Caco-2 (cell line): ENCODE measurements at regions of chr15 and their contacts with region 1.

Region 1: GRCh38 chr15:101294731-101295606 is at the start of gene SNRPA1:
- DNase-seq: peak; percentile 95 to 97
- H3K4me3 ChIP-seq: peak within 1 kb of the TSS; percentile 99
- H3K4me3 Mint-ChIP-seq: peak within 1 kb of the TSS; percentile 93
- H3K27ac Mint-ChIP-seq: peak within 1 kb of the TSS; percentile 96
- H3K4me1 ChIP-seq: peaks cover 7% of the 10 kb centered on the region; the same call in 1 of the 2 replicates
- H3K4me1 Mint-ChIP-seq: peaks cover 7% of the 10 kb centered on the region
- H3K27me3 ChIP-seq: no peaks in the 10 kb centered on the region
- H3K27me3 Mint-ChIP-seq: no peaks in the 10 kb centered on the region
- CTCF ChIP-seq: no peak
- total RNA-seq, gene SNRPA1: 123 and 132 TPM in 2 replicates

Region 2: DNA sequence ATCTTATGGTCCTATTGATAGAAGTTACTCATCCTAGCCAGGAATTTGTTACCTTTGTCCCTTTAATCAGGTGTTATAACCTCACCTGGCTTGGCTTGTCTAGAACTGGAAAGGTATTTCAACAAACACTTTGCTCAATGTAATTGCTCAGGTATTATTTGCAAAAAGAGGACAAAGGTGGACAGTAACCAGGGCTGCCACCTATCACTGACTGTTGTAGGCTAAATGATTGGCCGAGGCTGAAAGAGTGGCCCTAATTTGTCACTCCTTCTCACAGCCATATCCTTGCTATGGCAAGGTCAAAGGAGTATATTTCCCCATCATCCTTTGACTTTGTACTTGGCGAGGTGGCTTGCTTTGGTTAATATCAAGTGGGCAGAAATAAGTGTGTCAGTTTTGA is 15.0 kb before region 1 on chr15:
- CTCF ChIA-PET with region 1: interaction called, 5 read pairs
- POLR2A ChIA-PET with region 1: interaction called, 5 read pairs
- intact Hi-C with region 1: loop called (anchors 1 kb)
- DNase-seq: peak; percentile 72 to 80
- H3K4me3 ChIP-seq: no peak overlapping the region
- H3K4me3 Mint-ChIP-seq: peak overlapping the region; percentile 46
- H3K27ac Mint-ChIP-seq: no peak overlapping the region
- H3K4me1 ChIP-seq: peaks cover 36% of the 10 kb centered on the region
- H3K4me1 Mint-ChIP-seq: peaks cover 11% of the 10 kb centered on the region
- H3K27me3 ChIP-seq: no peaks in the 10 kb centered on the region
- H3K27me3 Mint-ChIP-seq: no peaks in the 10 kb centered on the region
- CTCF ChIP-seq: no peak

Region 3: DNA sequence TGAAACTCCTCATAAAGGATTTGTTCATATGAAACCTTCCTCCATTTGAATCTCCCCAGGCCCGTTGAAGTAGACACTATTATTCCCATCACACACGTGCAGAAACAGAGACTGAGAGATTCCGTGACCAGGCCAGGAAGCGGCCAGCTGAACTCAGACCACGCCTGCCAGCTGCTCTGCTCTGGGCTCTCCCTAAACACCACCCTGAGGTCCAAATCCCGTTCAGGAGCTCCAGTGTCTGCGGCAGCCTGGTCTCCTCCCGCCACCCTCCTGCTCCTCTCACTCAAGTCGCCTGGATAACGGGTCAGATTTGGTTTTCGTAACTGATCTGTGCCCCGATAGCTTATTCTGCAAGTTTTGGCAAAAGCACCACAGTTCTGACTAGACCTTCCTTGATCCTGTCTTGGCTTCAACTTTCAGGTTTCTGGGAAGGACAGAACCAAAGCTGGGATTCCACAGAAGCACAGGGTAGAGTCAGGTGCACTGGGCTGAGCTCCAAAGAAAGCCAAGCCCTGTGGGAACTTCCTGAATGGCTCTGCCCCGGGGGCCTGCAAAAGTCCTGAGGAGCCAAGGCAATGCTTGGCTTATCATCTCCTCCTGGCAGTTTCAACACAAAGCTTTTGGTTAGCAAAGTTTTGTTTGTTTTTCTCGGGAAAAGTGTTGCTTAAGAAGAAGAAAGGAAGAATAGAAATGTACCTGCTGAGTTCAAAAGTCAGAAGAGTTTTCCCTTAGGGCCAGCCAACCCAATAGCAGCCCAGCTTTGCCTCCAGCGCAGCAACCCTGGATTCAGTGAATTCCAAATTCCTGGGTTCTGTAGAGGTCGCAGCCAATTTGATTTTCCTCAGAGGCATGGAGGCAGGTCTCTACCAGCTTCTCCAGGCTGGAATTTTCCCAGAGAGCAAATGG is 53.9 kb after region 1 on chr15:
- CTCF ChIA-PET with region 1: no interaction called
- POLR2A ChIA-PET with region 1: no interaction called
- intact Hi-C with region 1: loop called (anchors 2 kb)
- DNase-seq: peak; percentile 65 to 67
- H3K4me3 ChIP-seq: no peak overlapping the region
- H3K4me3 Mint-ChIP-seq: peak overlapping the region; percentile 11
- H3K27ac Mint-ChIP-seq: peak overlapping the region; percentile 48
- H3K4me1 ChIP-seq: peaks cover 18% of the 10 kb centered on the region
- H3K4me1 Mint-ChIP-seq: peaks cover 17% of the 10 kb centered on the region
- H3K27me3 ChIP-seq: no peaks in the 10 kb centered on the region
- H3K27me3 Mint-ChIP-seq: no peaks in the 10 kb centered on the region
- CTCF ChIP-seq: no peak

Region 4: DNA sequence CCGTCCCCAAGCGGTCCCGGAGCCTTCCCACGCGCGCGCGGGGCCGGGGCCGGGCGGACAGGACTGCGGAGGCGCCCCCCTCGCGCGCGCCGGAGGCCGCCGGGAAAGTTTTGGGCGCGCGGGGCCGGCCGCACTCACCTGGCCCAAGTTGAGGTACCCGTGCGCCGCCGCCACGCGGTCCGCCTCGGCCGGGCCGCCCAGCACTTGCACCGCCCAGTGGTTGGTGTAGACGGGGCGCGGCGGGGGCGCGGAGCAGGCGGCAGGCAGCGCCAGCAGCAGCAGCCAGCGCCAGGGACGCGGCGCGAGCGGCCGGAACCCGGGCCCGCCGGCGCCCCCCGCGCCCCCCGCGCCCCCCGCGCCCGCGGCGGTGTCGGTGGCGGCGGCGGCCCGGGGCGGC is 194.3 kb after region 1 on chr15:
- CTCF ChIA-PET with region 1: interaction called, 3 read pairs
- POLR2A ChIA-PET with region 1: no interaction called
- intact Hi-C with region 1: loop called (anchors 5 kb)
- DNase-seq: peak; percentile 68 to 81
- H3K4me3 ChIP-seq: peak overlapping the region; percentile 69
- H3K4me3 Mint-ChIP-seq: peak overlapping the region; percentile 54
- H3K27ac Mint-ChIP-seq: no peak overlapping the region
- H3K4me1 ChIP-seq: no peaks in the 10 kb centered on the region
- H3K4me1 Mint-ChIP-seq: peaks cover 16% of the 10 kb centered on the region
- H3K27me3 ChIP-seq: no peaks in the 10 kb centered on the region
- H3K27me3 Mint-ChIP-seq: peaks cover 3% of the 10 kb centered on the region
- CTCF ChIP-seq: peak in 1 of 2 experiments; percentile 6

Region 5: DNA sequence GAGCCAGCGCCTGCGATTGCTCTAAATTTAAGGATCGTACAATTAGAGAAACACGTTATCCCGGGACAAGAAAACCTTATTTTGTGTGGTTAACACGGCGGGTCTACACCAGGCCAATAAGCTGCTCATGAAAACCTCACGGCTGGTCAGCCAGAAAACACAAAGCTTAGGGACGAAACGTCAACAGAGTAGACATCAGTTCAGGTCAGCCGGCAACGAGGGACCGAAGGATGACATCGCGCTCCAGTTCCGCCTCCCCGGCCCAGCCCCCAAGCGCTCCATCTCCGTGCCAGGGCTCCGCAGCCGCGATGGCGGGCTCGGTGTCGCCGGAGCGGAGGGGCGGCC is 356.8 kb after region 1 on chr15:
- CTCF ChIA-PET with region 1: interaction called, 4 read pairs
- POLR2A ChIA-PET with region 1: no interaction called
- intact Hi-C with region 1: loop called (anchors 2 kb)
- DNase-seq: no peak
- H3K4me3 ChIP-seq: peak overlapping the region; percentile 73
- H3K4me3 Mint-ChIP-seq: peak overlapping the region; percentile 79
- H3K27ac Mint-ChIP-seq: peak overlapping the region; percentile 66
- H3K4me1 ChIP-seq: peaks cover 9% of the 10 kb centered on the region
- H3K4me1 Mint-ChIP-seq: peaks cover 4% of the 10 kb centered on the region
- H3K27me3 ChIP-seq: no peaks in the 10 kb centered on the region
- H3K27me3 Mint-ChIP-seq: no peaks in the 10 kb centered on the region
- CTCF ChIP-seq: no peak